AG04449 (cell line): ENCODE measurements at regions of chrX and their contacts with region 1.

Region 1: GRCh38 chrX:153926858-153927671 is 1.0 kb upstream of the ARHGAP4 start:
- DNase-seq: no peak
- H3K4me3 ChIP-seq: peak overlapping the region; percentile 62
- CTCF ChIP-seq: no peak

Region 2: DNA sequence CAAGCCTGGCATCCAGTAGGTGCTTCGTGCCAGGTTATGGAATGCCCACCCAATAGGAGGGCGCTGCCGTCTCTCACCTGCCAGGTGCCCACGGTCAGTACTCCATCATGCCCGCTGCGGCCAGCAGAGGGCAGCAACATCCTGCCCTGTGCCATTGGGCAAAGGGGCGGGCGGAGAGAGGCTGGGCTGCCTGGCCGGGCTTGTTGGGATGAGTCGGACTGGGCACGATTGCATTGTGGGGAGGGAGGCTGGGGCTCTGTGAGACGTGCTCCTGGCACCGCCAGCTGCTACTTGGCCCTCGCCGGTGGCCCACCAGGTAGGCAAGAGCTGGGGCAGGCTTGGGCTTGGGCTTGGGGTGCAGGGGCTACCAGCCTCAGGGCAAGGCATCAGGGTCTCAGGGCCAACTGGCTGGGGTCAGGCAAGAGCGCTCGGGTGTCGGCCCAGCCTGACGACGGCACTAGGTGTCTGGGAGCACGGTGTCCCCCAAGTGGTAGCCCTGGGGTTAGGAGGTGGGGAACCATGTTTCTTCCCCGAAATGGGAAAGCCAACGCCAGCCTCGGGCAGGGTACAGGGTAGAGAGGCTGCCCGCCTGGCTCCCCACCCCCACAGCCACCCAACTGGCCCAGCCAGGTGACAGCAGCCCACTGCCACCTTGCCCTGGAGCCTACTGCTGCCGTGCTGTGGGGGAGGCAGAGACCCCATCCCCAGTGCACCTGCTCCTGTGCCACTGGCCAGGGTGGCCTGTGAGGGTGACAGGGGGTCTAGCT is 162.9 kb before region 1 on chrX and contains the start of gene PLXNB3:
- CTCF ChIA-PET with region 1: interaction called, 12 read pairs
- POLR2A ChIA-PET with region 1: interaction called, 9 read pairs
- DNase-seq: peak; percentile 9
- H3K4me3 ChIP-seq: peak within 1 kb of the TSS; percentile 62
- CTCF ChIP-seq: peak; percentile 89

Region 3: GRCh38 chrX:153875391-153876111 is 51.5 kb before region 1 on chrX:
- CTCF ChIA-PET with region 1: no interaction called
- POLR2A ChIA-PET with region 1: no interaction called
- DNase-seq: no peak
- H3K4me3 ChIP-seq: no peak overlapping the region
- CTCF ChIP-seq: no peak

Region 4: DNA sequence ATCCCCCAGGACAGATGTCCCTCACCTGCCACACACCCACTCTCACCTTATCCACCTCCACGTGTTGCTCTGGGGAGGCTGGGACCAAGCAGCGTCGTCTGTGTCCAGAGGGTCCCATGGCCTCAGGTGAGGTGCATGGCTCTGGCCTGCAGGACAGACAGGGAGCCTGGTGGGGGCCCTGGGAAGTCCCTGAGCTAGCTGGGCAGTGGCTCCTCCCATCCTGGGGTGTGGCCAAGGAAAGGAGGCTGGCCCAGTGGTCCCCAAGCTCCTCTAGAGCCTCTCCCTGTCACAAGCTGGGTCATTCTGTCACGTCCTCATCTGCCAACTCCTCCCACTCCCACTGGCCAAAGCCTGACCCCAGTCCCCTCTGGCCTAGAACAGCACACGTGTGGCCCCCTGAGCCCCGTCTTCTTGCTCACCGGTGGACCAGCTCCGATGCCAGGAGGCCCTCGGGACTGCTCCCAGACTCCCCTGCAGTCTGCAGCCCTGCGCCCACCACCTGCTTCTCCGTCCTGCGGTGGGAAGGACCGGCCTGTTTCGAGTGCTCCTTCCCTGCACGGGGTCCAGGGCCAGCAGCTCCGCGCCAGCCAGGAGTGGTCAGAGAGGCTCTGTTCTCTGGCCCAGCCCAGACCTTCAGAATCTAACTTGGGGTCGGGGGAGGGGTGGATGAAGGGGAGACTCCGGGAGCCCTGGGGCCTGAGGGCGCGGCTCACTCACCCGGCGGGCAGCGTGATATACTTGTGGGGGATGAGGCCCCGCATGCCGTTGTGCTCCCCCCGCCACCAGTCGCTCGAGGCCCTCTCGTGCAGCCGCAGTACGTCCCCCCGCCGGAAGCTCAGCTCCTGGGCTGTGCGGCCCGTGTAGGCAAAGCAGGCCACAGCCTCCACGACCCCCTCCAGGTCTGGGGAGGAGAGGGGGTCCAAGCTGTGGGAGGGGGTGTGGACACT is 17.8 kb before region 1 on chrX:
- CTCF ChIA-PET with region 1: interaction called, 29 read pairs
- POLR2A ChIA-PET with region 1: interaction called, 3 read pairs
- DNase-seq: no peak
- H3K4me3 ChIP-seq: no peak overlapping the region
- CTCF ChIP-seq: no peak

Region 5: GRCh38 chrX:154333837-154334271 is 406.8 kb after region 1 on chrX:
- CTCF ChIA-PET with region 1: no interaction called
- POLR2A ChIA-PET with region 1: no interaction called
- DNase-seq: no peak
- H3K4me3 ChIP-seq: no peak overlapping the region
- CTCF ChIP-seq: no peak